WTC11 (cell line): ENCODE measurements at regions of chr11 and their contacts with region 1.

Region 1: DNA sequence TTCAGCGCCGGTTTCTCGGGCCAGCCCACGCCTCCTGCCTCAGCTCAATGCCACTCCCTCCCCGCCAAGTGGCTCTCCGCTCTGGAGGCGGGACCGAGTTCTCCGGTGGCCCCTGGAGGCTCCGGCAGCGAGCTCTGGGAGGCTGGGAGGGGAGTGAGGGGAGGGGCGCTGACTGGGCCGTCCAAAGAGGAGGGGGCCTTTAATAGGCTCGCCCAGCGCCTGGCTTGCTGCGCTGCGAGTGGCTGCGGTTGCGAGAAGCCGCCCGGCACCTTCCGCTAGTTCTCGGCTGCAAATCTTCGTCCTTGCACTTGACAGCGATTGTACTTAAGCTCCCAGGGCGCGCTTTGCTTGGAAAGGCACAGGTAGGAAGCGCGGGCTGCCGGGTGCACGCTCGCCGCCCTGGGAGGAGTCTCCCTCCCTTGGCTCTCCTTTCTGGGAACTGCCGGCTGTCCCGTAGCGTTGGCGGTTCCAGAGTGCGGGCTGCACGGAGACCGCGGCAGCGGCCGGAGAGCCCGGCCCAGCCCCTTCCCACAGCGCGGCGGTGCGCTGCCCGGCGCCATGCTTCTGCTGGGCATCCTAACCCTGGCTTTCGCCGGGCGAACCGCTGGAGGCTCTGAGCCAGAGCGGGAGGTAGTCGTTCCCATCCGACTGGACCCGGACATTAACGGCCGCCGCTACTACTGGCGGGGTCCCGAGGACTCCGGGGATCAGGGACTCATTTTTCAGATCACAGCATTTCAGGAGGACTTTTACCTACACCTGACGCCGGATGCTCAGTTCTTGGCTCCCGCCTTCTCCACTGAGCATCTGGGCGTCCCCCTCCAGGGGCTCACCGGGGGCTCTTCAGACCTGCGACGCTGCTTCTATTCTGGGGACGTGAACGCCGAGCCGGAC is at the start of gene ADAMTS15:
- DNase-seq: peak; percentile 91
- ATAC-seq: peak; percentile 84
- H3K4me3 Mint-ChIP-seq: peak within 1 kb of the TSS; percentile 79
- H3K27ac Mint-ChIP-seq: no peak within 1 kb of the TSS
- H3K4me1 Mint-ChIP-seq: peaks cover 10% of the 10 kb centered on the region
- H3K27me3 Mint-ChIP-seq: peaks cover 85% of the 10 kb centered on the region
- CTCF ChIP-seq: no peak
- total RNA-seq, gene ADAMTS15: 3.1 to 3.7 TPM (median 3.2 TPM) in 3 replicates

Region 2: GRCh38 chr11:130827451-130828377 is 379.1 kb after region 1 on chr11:
- CTCF ChIA-PET with region 1: interaction called, 10 read pairs
- POLR2A ChIA-PET with region 1: interaction called, 5 read pairs
- DNase-seq: peak; percentile 78
- ATAC-seq: peak; percentile 97
- H3K4me3 Mint-ChIP-seq: no peak overlapping the region
- H3K27ac Mint-ChIP-seq: no peak overlapping the region
- H3K4me1 Mint-ChIP-seq: peaks cover 25% of the 10 kb centered on the region
- H3K27me3 Mint-ChIP-seq: no peaks in the 10 kb centered on the region; the same call in 1 of the 2 replicates
- CTCF ChIP-seq: no peak; the same call in 1 of the 2 replicates